Activated naive CD4-positive, alpha-beta T cell treated with anti-CD3 and anti-CD28 coated beads for 36 hours (primary cell): ENCODE measurements at regions of chr2 and their contacts with region 1.

Region 1: GRCh38 chr2:16773080-16773713 is 107.6 kb upstream of the CYRIA start:
- DNase-seq: peak; percentile 50
- H3K4me3 Mint-ChIP-seq: no peak overlapping the region
- H3K27ac Mint-ChIP-seq: no peak overlapping the region
- H3K4me1 Mint-ChIP-seq: no peaks in the 10 kb centered on the region
- H3K27me3 Mint-ChIP-seq: peaks cover 26% of the 10 kb centered on the region

Region 2: DNA sequence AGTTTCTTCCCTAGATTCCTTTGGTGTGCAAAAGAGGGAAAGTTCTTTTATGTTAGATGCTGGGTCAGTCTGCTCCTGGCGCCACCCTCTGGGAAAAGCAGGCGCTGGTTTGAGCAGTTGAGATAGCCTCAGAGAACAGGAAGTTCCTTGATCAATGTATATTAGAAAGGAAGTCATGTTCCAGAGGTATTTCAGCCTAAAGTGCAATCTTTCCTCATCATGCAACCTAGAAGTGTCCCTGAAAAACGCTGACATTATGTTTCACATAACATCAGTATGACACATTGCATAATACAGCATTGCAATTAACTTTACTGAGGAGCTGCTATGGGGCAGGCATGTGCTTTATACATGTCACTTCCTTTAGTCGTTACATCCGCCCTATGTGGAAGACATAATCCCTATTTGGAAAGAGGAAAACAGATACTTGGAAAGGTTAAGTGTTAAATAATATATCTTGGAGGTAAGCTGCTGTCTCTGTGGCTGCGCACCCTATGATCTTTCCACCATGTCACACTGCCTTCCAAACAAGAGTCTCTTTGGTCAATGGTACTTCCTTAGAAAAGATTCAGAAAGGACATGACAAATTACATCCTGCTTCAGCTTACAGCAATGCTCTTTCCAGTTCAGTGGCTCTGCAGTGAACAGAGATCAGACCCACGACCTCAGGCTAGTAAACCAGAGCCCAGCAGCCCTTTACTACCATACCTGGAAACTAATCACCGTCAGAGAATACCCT is 375.4 kb after region 1 on chr2:
- CTCF ChIA-PET with region 1: no interaction called
- intact Hi-C with region 1: loop called (anchors 5 kb)
- DNase-seq: no peak
- H3K4me3 Mint-ChIP-seq: no peak overlapping the region
- H3K27ac Mint-ChIP-seq: no peak overlapping the region
- H3K4me1 Mint-ChIP-seq: no peaks in the 10 kb centered on the region
- H3K27me3 Mint-ChIP-seq: no peaks in the 10 kb centered on the region

Region 3: DNA sequence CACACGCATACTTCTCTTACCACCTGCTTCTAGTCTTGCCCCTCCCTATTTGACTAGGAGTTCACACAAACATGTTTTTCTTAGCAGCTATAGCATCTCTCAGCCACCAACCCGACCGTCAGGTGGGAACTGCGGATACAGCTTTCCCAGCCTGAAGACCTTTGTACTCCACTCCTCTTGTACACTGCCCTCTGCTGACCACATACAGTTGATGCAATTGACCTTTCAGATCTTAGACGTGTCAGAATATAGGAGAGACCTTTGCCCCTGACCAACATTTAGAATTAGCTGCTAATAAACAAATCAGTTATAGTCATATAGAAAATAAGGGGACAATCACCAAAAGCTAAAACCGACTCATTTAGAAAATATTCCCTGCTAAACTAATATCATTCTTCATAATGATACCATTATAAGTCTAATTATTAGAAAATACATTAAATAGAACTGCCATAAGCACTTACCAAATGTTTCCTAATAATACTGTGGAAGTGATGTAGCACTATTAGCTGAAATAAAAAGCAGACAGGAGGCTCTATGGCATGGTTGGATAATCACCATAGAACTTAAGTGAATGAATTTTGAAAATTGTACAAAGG is 536.6 kb after region 1 on chr2:
- CTCF ChIA-PET with region 1: interaction called, 3 read pairs
- intact Hi-C with region 1: loop called (anchors 2 kb)
- DNase-seq: peak; percentile 14
- H3K4me3 Mint-ChIP-seq: no peak overlapping the region
- H3K27ac Mint-ChIP-seq: no peak overlapping the region
- H3K4me1 Mint-ChIP-seq: no peaks in the 10 kb centered on the region
- H3K27me3 Mint-ChIP-seq: peaks cover 19% of the 10 kb centered on the region

Region 4: GRCh38 chr2:17672583-17673317 is 899.6 kb after region 1 on chr2:
- CTCF ChIA-PET with region 1: no interaction called
- intact Hi-C with region 1: loop called (anchors 1 kb)
- DNase-seq: no peak
- H3K4me3 Mint-ChIP-seq: no peak overlapping the region
- H3K27ac Mint-ChIP-seq: no peak overlapping the region
- H3K4me1 Mint-ChIP-seq: peaks cover 11% of the 10 kb centered on the region
- H3K27me3 Mint-ChIP-seq: no peaks in the 10 kb centered on the region